ENCODE measurements at regions of chr16 and their contacts with region 1.

Region 1: DNA sequence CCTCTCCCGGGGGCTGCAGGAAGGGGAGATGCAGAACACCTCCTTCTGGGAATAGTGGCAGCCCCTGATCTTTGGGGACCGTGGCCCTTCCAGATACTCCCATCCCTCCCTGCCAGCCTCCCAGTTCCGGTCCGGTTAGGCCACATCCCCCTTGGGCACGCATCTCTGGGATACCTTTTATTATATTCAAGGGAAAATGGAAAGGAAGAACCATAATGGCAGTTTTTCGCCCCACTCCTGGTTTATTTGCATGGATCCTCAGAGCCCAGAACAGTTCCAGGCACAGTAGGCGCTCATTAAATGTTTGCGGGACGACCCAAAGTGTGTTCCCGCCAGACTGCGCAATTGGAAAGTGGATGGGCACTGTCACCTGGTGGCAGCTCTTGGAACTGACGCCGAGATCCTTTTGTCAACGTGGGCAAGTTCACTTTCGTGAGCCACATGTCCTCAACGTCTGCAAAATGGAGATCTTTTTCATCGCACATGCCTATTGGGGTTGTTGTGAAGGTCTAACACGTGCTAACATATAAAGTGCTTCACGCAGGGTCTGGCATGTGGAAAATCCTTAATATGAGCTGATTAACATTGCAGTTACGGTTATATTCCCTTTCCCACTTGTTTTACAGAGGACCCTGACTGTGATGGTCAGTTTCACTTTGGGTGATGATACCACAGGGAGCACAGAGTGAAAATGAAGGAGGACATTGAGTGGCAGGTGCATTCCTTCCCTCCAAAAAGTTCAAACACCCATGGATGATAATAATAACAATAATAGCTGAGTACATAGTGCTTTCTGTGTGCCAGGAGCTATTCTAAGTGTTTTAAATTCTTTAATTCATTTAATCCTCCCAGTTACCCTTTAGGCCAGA is 1.7 kb upstream of the GPRC5B start:
- DNase-seq: peak; percentile 91
- ATAC-seq: peak; percentile 72

Region 2: GRCh38 chr16:19555162-19555937 is 331.0 kb before region 1 on chr16 and contains the start of gene VPS35L:
- intact Hi-C with region 1: loop called (anchors 10 kb)
- DNase-seq: peak; percentile 98
- ATAC-seq: peak; percentile 99
- total RNA-seq, gene VPS35L: 61.4 TPM

Region 3: GRCh38 chr16:19595043-19595767 is 291.1 kb before region 1 on chr16:
- intact Hi-C with region 1: loop called (anchors 5 kb)
- DNase-seq: no peak
- ATAC-seq: no peak

Region 4: GRCh38 chr16:19717771-19718602 is 168.3 kb before region 1 on chr16 and contains the starts of genes IQCK and KNOP1:
- intact Hi-C with region 1: loop called (anchors 10 kb)
- DNase-seq: peak; percentile 94
- ATAC-seq: peak; percentile 97
- total RNA-seq, gene IQCK: 24.5 TPM
- total RNA-seq, gene KNOP1: 19.2 TPM